Activated CD4-positive, alpha-beta T cell treated with anti-CD3 and anti-CD28 coated beads, Interleukin-2, amount 10 ng/mL, durations not matched to agents 7 days and 5 days (primary cell): ENCODE measurements at regions of chr17 and their contacts with region 1.

Region 1: DNA sequence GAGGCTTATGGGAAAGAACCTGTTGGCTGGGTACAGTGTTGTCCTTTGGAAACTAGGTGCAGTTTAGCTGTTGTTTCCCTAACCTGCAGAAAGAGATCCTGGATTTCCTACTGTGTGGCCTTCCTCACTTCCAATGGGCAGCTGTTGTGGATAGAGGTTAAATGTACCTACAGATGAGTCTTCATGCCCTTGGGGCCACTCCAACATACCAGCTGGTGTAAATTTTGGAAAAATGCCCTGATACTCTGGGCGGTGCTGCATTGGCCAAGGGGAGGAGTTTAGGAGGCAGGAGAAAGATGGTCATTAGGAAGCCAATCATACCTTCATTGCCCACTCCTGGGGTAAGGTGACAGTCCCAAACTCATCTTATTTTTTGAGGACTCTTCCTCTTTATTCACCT is 70.3 kb downstream of the SNX11 start:
- DNase-seq: no peak
- H3K4me3 Mint-ChIP-seq: no peak overlapping the region
- H3K27ac Mint-ChIP-seq: no peak overlapping the region
- H3K4me1 Mint-ChIP-seq: peaks cover 29% of the 10 kb centered on the region
- H3K27me3 Mint-ChIP-seq: no peaks in the 10 kb centered on the region

Region 2: GRCh38 chr17:48194097-48194550 is 16.3 kb after region 1 on chr17:
- CTCF ChIA-PET with region 1: interaction called, 5 read pairs
- POLR2A ChIA-PET with region 1: interaction called, 11 read pairs
- DNase-seq: peak; percentile 33
- H3K4me3 Mint-ChIP-seq: peak overlapping the region; percentile 20
- H3K27ac Mint-ChIP-seq: peak overlapping the region; percentile 46
- H3K4me1 Mint-ChIP-seq: peaks cover 59% of the 10 kb centered on the region
- H3K27me3 Mint-ChIP-seq: no peaks in the 10 kb centered on the region